ENCODE measurements at regions of chr2 and their contacts with region 1.

Region 1: GRCh38 chr2:46615986-46616485 is 136.7 kb downstream of the TMEM247 start:
- DNase-seq: peak in 5 of 9 donors; percentile 2 to 21 (median 11)
- ATAC-seq: no peak
- H3K4me3 ChIP-seq: peak overlapping the region; percentile 91
- H3K4me3 Mint-ChIP-seq: peak overlapping the region; percentile 89 to 97 (median 95)
- H3K27ac ChIP-seq: peak overlapping the region; percentile 92
- H3K27ac Mint-ChIP-seq: peak overlapping the region; percentile 92 to 99 (median 95)
- H3K4me1 ChIP-seq: peaks cover 20 to 29% of the 10 kb centered on the region in 2 donors
- H3K4me1 Mint-ChIP-seq: peaks cover 24 to 56% (median 46%) of the 10 kb centered on the region in 7 donors
- H3K27me3 ChIP-seq: no peaks in the 10 kb centered on the region
- H3K27me3 Mint-ChIP-seq: no peaks in the 10 kb centered on the region

Region 2: DNA sequence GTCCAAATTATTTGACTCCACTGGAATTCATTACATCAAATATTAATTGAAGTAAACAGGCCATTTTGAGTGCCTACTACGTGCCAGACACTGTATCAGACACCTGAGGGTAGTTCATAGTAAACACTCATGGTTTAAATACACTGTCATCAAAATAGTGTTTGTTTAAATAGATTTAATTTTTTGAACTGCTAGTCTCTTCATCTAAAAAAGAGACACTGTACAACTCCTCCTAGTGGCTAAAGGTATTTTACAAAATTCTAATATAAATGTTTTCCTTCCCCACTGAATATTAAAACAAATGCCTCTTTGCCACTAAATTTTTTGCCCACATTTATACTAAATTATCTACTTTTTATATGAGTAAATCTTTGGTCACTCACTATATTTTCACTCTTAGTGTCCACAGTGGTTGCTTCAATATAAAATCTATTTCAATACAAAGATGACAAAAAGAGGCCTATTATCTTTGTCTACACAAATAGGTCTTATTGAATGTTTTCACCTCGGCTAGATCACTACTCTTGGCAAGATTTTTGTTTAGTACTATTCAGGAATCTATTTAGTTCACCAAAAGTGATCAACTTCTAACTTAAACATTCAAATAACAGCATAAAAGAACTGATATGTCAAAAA is 14.6 kb before region 1 on chr2:
- CTCF ChIA-PET with region 1: interaction called, 3 read pairs
- POLR2A ChIA-PET with region 1: interaction called, 3 read pairs
- intact Hi-C with region 1: loop called in 1 of 2 experiments (anchors 1 kb)
- DNase-seq: peak in 4 of 9 donors; percentile 7 to 26 (median 14)
- ATAC-seq: no peak
- H3K4me3 ChIP-seq: no peak overlapping the region
- H3K4me3 Mint-ChIP-seq: no peak overlapping the region
- H3K27ac ChIP-seq: no peak overlapping the region
- H3K27ac Mint-ChIP-seq: no peak overlapping the region
- H3K4me1 ChIP-seq: no peaks in the 10 kb centered on the region
- H3K4me1 Mint-ChIP-seq: peaks cover 0 to 9% (median 4%) of the 10 kb centered on the region in 7 donors
- H3K27me3 ChIP-seq: no peaks in the 10 kb centered on the region
- H3K27me3 Mint-ChIP-seq: no peaks in the 10 kb centered on the region

Region 3: GRCh38 chr2:46776687-46777327 is 160.8 kb after region 1 on chr2:
- CTCF ChIA-PET with region 1: no interaction called
- POLR2A ChIA-PET with region 1: no interaction called
- intact Hi-C with region 1: no loop called
- DNase-seq: peak in 7 of 9 donors; percentile 18 to 44 (median 32)
- ATAC-seq: peak; percentile 47
- H3K4me3 ChIP-seq: no peak overlapping the region
- H3K4me3 Mint-ChIP-seq: no peak overlapping the region
- H3K27ac ChIP-seq: no peak overlapping the region
- H3K27ac Mint-ChIP-seq: no peak overlapping the region
- H3K4me1 ChIP-seq: no peaks in the 10 kb centered on the region
- H3K4me1 Mint-ChIP-seq: peaks cover 0 to 2% (median 0%) of the 10 kb centered on the region in 7 donors
- H3K27me3 ChIP-seq: no peaks in the 10 kb centered on the region
- H3K27me3 Mint-ChIP-seq: peaks cover 0 to 14% (median 8%) of the 10 kb centered on the region in 5 donors

Measured in naive thymus-derived CD4-positive, alpha-beta T cell (primary cell).